G401 (cell line): ENCODE measurements at regions of chr1 and their contacts with region 1.

Region 1: DNA sequence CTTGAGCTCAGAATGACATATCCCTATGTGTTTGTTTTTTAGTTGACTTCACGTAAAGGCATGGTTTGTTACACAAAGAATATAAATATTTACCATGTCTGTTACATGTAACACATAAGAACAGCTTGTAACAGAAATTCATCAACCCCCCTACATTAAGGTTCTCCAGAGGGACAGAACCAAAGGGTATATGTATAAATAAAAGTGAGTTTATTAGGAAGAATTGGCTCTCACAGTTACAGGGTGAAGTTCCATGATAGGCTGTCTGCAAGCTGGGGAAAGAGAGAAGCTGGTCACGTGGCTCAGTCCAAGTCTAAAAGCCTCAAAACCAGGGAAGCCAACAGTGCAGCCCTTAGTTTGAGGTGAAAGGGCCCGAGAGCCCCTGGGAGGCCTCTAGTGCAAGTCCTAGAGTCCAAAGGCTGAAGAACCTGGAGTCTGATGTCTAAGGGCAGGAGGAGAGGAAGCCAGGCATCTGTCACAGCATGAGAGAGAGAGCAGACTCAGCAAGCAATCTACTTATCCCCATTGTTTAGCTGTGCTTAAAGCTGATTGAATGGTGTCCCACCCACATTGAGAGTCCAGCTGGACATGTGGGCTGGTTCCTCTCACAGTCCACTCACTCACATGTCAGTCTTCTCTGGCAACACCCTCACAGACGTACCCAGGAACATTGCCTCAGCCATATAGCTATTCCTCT is 15.8 kb downstream of the THRAP3 start:
- DNase-seq: no peak

Region 2: GRCh38 chr1:36008546-36009197 is 231.4 kb before region 1 on chr1:
- in situ Hi-C with region 1: no loop called
- DNase-seq: no peak

Region 3: DNA sequence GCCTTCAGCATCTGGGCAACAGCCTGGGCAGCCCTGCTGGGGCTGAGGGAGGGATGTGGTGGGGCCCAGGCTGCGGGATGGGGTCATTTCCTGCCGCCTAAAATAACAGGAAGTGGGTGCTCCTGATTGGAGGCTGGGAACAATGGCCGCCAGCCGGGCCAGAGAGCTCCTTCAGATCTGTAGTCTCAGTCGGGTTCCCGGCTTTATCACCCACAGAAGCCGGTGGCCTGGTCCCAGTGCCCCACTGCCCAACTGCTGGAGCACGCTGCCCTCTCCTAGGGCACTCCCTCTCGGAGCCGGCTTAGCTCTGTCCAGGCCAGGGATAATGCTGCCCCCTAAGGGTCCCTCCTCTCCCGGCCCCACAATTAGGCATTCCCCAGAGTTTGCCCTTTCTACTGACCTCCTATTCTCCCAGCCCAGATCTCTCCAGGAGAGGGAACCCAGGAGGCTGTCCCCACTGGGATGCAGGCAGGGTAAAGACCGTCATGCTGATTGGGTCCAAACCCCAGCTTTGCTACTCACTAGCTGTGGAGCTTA is 79.1 kb before region 1 on chr1:
- in situ Hi-C with region 1: loop called (anchors 10 kb)
- DNase-seq: peak; percentile 42

Region 4: DNA sequence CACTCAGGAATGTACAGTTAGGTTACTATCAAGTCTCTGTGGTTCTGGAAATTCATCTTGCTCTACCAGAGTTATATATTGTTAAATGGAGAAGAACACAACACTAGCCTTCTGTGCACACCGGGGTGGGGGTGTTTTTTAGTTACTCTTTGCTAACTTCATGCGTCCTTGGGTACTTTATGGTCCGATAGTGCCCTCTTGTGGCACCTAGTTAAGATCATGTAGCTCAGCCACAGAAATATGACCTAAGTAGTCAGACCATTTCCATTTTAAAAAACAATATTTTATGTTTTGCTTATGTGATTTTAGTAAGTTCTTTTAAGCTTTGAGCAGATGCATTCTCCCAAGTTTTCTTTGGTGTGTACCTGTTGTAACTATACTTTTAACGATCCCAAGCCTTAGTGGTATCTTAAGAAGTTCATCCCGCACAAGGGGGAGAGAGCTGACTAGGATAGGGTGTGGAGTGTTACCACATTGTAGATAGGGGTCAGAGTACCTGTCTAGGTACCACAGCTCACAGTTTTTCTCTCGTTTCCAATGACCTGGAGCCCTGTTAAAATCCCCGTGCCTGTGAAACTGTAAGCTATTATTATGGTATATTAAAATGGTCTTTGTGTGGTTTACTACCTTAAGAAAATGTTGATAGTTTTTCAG is 45.5 kb after region 1 on chr1:
- in situ Hi-C with region 1: loop called (anchors 10 kb)
- DNase-seq: peak; percentile 91